ENCODE measurements at regions of chr12 and their contacts with region 1.

Region 1: DNA sequence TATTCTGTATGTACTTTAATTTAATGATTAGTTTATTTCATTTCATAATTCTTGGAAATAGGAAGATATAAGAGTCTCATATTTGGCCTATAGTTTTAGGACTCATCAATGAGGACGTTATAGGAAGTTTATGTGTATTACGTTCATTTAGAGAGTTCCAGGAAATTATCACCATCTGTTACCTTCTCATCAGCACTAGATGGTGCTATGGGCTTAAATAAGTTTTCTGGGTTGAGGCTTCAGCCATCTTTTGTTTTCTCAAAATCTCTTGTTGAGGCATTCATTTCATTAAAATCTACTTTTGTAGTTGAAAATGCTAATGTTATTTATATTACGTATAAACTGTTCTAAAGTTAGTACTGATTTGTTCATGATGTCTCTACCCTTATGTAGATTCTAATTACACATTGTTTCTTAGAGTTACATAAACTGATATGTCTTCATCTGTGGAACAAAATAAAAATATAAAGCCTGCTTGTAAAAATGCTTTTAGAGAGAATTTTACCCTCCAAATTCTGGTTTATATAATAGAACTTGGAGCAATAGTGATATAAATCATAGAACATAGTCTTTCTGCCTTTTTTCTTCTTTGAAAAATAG is 89.2 kb downstream of the CFAP54 start:
- DNase-seq: peak; percentile 54
- ATAC-seq: peak; percentile 90
- H3K4me3 ChIP-seq: no peak overlapping the region
- H3K27ac ChIP-seq: no peak overlapping the region
- H3K4me1 ChIP-seq: peaks cover 0 to 5% of the 10 kb centered on the region in 2 experiments; a peak in 1 of 4 replicates
- H3K27me3 ChIP-seq: no peaks in the 10 kb centered on the region
- CTCF ChIP-seq: peak; percentile 52 to 75 (median 70); a peak in 4 of 6 replicates
- POLR2A ChIP-seq: no peak
- RAD21 ChIP-seq: peak; percentile 87

Region 2: GRCh38 chr12:97148941-97149559 is 570.4 kb after region 1 on chr12:
- CTCF ChIA-PET with region 1: interaction called, 4 read pairs
- POLR2A ChIA-PET with region 1: no interaction called
- RAD21 ChIA-PET with region 1: no interaction called
- intact Hi-C with region 1: loop called (anchors 5 kb)
- DNase-seq: peak; percentile 29
- ATAC-seq: peak; percentile 100
- H3K4me3 ChIP-seq: no peak overlapping the region
- H3K27ac ChIP-seq: no peak overlapping the region
- H3K4me1 ChIP-seq: no peaks in the 10 kb centered on the region
- H3K27me3 ChIP-seq: peaks cover 27% of the 10 kb centered on the region
- CTCF ChIP-seq: peak; percentile 47 to 91 (median 89); a peak in 5 of 6 replicates
- POLR2A ChIP-seq: no peak
- RAD21 ChIP-seq: peak; percentile 70

Region 3: DNA sequence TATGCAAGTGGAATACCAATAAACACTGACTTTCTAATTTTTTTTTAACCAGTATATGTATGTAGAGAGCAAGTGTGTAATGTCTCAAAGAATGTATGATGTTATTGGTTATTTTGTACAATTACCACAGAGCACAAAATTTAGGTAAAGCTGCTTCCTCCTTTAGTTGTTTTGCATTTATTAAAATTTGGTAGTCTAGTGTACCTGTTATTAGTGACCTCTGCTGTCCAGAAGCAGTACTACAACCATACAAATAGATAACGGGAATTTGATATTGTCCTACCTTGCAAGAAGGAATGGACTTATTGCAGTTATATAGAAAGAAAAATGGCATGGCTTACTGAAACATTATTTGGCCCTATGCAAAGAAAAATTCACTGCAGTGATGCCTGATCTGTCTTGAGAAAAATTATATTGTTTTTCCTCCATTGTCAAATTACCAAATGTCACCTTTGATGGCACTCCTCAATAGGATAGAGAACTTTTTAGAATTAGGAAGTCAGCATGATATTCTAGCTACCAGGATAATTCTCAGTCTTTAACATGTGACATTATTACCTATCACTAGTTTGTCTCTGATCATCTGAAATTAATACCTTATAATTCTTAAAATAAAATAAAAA is 730.1 kb after region 1 on chr12:
- CTCF ChIA-PET with region 1: no interaction called
- POLR2A ChIA-PET with region 1: no interaction called
- RAD21 ChIA-PET with region 1: no interaction called
- intact Hi-C with region 1: loop called (anchors 2 kb)
- DNase-seq: peak; percentile 46
- ATAC-seq: no peak
- H3K4me3 ChIP-seq: no peak overlapping the region
- H3K27ac ChIP-seq: no peak overlapping the region
- H3K4me1 ChIP-seq: no peaks in the 10 kb centered on the region
- H3K27me3 ChIP-seq: peaks cover 19% of the 10 kb centered on the region; the same call in 1 of the 2 replicates
- CTCF ChIP-seq: peak; percentile 46 to 72 (median 62); a peak in 5 of 6 replicates
- POLR2A ChIP-seq: no peak
- RAD21 ChIP-seq: peak; percentile 51

Region 4: GRCh38 chr12:97404543-97404942 is 825.9 kb after region 1 on chr12:
- CTCF ChIA-PET with region 1: interaction called, 6 read pairs
- POLR2A ChIA-PET with region 1: no interaction called
- RAD21 ChIA-PET with region 1: no interaction called
- intact Hi-C with region 1: loop called (anchors 10 kb)
- DNase-seq: peak; percentile 10
- ATAC-seq: peak; percentile 69; the same call in 1 of the 2 replicates
- H3K4me3 ChIP-seq: no peak overlapping the region
- H3K27ac ChIP-seq: no peak overlapping the region
- H3K4me1 ChIP-seq: no peaks in the 10 kb centered on the region
- H3K27me3 ChIP-seq: no peaks in the 10 kb centered on the region
- CTCF ChIP-seq: peak; percentile 30 to 74 (median 71); a peak in 5 of 6 replicates
- POLR2A ChIP-seq: no peak
- RAD21 ChIP-seq: peak; percentile 57

Region 5: DNA sequence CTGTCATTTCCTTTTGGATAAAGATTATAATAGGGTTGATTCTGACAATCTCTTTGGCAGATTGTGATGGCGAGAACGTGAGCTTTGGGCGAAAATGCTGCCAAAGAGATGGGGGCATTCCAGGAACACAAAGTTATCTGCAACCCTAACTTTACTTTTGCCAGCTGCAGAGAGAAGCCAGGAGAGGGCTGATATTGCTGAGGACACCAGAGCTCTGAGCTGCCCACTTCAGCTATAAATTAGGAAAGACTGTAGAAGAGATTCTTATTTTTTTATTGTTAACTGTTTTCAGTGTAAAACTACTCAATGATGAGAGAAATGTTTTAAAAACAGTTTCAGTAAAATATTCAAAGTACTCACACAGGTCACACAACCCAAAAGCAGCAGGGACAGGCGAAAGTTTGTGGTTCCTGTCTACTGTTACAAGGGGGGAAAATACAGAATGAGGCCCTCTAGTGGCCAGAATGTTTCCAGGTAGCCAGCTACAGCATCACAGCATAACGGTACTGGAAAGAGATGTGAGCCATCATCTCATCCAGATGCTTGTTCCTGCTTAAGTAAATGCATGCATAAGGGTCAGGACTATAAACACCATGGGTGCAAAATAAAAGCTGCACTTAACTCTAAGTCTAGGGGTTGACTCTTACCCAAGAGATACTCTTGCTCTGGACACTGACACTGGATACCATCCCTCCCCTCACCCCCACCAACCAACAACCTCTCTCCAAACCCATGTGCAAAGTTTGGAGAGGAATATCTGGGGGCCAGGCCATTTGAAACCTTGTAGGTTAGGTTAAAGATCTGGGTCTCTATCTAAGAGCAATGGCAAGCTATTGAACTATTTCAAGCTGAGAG is 1382.4 kb after region 1 on chr12:
- CTCF ChIA-PET with region 1: no interaction called
- POLR2A ChIA-PET with region 1: no interaction called
- RAD21 ChIA-PET with region 1: no interaction called
- intact Hi-C with region 1: loop called (anchors 2 kb)
- DNase-seq: peak; percentile 8
- ATAC-seq: peak; percentile 78
- H3K4me3 ChIP-seq: no peak overlapping the region
- H3K27ac ChIP-seq: no peak overlapping the region
- H3K4me1 ChIP-seq: no peaks in the 10 kb centered on the region
- H3K27me3 ChIP-seq: no peaks in the 10 kb centered on the region
- CTCF ChIP-seq: peak; percentile 29 to 82 (median 76); a peak in 5 of 6 replicates
- POLR2A ChIP-seq: no peak
- RAD21 ChIP-seq: peak; percentile 36

Region 6: DNA sequence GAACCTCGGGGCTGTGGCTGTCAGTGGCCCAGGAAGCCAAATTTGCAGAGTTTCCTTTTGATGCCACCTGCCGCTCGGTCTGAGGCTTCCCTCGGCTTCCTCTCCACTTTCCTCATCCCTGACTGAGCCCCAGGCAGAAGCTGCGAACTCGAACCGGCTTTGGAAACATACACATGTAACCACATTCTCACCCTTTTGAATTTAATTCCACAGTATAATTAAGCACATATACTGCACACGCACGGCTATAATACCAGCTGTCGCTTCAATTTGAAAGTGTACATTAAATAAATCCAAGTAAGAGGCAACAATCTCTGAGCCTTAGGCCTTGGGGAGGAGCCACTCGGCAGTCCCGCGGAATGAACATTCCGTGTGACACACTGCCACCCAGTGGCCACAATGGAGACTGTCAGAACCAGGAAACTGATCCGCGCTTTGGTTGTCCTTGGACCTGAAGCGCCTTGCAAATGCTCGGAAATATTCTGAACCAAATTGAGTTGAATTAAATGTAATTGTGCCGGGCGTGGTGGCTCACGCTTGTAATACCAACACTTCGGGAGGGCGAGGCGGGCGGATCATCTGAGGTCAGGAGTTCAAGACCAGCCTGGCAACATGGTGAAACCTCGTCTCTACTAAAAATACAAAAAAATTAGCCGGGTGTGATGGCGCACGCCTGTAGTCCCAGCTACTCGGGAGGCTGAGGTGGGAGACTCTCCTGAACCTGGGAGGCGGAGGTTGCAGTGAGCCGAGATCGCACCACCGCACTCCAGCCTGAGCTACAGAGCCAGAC is 1818.9 kb after region 1 on chr12:
- CTCF ChIA-PET with region 1: no interaction called
- POLR2A ChIA-PET with region 1: no interaction called
- RAD21 ChIA-PET with region 1: no interaction called
- intact Hi-C with region 1: loop called (anchors 5 kb)
- DNase-seq: peak; percentile 80
- ATAC-seq: peak; percentile 72
- H3K4me3 ChIP-seq: peak overlapping the region; percentile 14 to 52
- H3K27ac ChIP-seq: peak overlapping the region; percentile 51
- H3K4me1 ChIP-seq: peaks cover 48 to 57% of the 10 kb centered on the region in 2 experiments
- H3K27me3 ChIP-seq: no peaks in the 10 kb centered on the region
- CTCF ChIP-seq: peak; percentile 81 to 91 (median 88)
- POLR2A ChIP-seq: no peak
- RAD21 ChIP-seq: peak; percentile 90